ENCODE measurements at regions of chr1 and their contacts with region 1.

Region 1: DNA sequence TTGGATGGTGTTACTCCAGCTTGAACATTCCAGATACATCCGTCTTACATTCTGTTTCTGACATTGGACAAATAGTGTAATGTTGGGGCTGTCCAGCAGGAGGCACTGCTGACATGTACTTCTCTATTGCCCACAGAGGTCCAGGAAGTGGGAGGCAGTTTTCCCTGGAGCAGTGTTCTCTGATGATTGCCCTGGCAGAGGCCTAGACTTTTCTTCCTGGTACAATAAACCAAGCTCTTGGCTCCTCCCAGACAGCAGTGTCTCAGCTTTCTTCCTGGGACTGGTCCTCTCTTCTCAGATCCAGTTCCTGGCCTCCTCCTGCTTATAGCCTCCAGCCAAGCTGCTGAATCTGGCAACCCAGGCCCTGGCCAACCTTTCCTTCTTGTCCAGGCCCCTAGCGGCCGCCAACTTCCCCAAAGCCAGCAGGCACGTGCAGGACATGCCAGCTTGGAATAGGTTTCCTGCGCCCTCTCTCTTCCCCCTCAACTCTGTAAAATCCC is 14.9 kb upstream of the IFNLR1 start:
- DNase-seq: peak; percentile 73 to 96 (median 87)
- H3K4me3 ChIP-seq: no peak overlapping the region
- H3K27ac ChIP-seq: no peak overlapping the region
- H3K4me1 ChIP-seq: no peaks in the 10 kb centered on the region
- H3K27me3 ChIP-seq: no peaks in the 10 kb centered on the region
- CTCF ChIP-seq: peak; percentile 62 to 88 (median 85)
- POLR2A ChIP-seq: no peak

Region 2: DNA sequence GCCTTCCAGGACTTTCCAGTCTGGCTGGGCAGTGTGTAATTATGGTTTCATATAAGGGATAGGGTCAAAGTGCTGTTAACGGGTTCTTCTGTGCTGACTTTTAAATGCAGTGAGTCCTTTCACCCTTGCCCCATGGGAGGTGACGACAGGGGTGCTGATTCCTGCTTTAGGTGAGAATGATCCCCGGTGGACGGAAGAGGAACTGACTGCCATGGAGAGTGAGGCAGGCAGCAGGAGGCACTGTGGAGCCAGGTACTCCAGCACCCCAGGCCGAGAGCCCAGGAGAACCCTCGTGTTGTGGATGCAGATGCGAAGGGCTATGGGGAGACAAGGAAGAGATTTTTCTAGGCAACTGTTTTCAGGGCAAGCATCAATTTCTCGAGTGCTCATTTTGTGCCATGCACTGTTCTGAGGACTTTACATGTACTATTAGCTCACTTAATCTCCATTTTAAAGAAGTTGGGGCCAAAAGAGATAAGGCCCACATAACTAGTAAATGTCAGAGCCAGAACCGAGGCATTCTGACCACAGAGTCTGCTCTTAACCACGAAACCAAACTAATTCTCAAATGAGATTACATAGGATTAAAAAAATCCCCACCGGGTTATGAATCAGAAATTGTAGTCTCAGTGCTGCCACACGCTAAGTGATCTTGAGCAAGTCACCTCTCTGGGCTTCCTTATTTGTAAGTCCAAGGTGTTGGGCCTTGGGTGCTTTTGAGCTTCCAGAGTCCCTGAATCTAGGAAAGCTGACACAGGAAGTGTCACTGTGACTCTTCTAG is 183.4 kb after region 1 on chr1:
- intact Hi-C with region 1: loop called (anchors 2 kb)
- DNase-seq: no peak
- H3K4me3 ChIP-seq: no peak overlapping the region
- H3K27ac ChIP-seq: no peak overlapping the region
- H3K4me1 ChIP-seq: no peaks in the 10 kb centered on the region
- H3K27me3 ChIP-seq: no peaks in the 10 kb centered on the region
- CTCF ChIP-seq: no peak
- POLR2A ChIP-seq: no peak

Region 3: DNA sequence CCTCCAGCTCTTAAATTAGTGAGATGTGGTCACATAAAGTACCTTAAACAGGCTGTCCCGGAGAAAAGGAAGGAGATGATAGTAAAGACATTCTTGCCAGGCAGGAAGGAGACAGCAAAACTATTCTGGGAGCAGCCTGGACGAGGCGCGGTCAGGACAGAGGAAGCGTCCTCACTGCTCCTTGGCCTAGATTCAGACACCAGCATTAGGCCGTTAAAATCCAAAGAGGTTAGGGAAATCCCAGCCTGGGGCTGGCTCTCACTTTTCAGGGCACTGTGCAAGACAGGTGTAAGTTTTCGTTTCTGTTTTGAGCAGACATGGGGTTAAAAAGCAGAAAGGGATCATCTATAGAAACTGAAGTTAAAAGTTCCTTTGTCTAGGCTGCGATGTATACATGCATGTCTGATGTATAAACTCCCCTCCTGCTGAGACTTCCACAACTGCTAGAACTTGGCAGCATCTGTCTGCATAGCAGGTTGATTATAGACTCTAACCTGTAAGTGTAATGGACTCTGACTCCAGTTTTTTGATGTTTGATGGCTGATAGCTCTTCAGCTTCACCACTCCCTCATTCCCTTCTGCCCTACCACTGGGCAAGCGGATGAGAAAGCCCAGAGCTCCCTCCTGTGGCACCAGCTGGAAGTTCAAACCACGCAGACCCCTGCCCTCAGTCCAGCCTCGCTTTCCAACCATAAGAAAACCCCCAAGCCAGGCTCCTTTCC is 190.1 kb after region 1 on chr1:
- intact Hi-C with region 1: loop called (anchors 2 kb)
- DNase-seq: peak; percentile 61 to 80 (median 71)
- H3K4me3 ChIP-seq: peak overlapping the region in 1 of 4 donors; percentile 23
- H3K27ac ChIP-seq: peak overlapping the region; percentile 42 to 86 (median 74)
- H3K4me1 ChIP-seq: peaks cover 7 to 9% of the 10 kb centered on the region in 2 donors
- H3K27me3 ChIP-seq: no peaks in the 10 kb centered on the region
- CTCF ChIP-seq: peak; percentile 46 to 81 (median 72)
- POLR2A ChIP-seq: no peak

Region 4: DNA sequence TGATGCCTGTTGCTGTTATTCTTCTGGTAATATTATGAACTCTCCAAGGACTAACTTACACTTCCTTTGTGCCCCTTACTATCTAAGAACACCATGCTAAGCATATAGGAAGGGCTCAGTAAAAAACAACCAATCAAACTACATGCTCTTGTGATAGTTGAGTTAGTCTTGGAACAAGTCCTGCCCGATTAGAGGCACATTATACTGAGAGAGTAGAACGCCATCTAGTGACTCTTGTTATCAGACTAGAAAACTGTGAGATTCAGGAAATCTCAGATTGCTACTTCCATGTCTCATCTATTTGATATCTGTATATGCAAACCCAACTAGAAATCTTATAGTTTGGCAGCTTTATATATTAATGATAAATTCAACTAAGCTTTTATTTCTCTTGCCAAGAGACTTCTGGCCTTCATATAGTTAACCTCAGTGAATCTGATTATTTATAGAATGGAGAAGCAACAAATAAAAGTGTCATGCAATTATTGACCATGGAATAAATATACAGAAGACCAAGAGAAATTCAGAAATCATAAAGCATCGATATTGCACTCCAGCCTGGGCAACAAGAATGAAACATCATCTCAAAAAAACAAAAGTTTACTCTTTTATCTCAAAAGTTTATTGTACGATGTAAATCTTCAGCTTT is 433.3 kb after region 1 on chr1:
- intact Hi-C with region 1: loop called (anchors 5 to 10 kb)
- DNase-seq: no peak
- H3K4me3 ChIP-seq: no peak overlapping the region
- H3K27ac ChIP-seq: no peak overlapping the region
- H3K4me1 ChIP-seq: no peaks in the 10 kb centered on the region
- H3K27me3 ChIP-seq: no peaks in the 10 kb centered on the region
- CTCF ChIP-seq: peak; percentile 28 to 57 (median 52)
- POLR2A ChIP-seq: no peak

Measured in adrenal gland (tissue), 19 donors.